AG04450 (cell line): ENCODE measurements at regions of chr12 and their contacts with region 1.

Region 1: DNA sequence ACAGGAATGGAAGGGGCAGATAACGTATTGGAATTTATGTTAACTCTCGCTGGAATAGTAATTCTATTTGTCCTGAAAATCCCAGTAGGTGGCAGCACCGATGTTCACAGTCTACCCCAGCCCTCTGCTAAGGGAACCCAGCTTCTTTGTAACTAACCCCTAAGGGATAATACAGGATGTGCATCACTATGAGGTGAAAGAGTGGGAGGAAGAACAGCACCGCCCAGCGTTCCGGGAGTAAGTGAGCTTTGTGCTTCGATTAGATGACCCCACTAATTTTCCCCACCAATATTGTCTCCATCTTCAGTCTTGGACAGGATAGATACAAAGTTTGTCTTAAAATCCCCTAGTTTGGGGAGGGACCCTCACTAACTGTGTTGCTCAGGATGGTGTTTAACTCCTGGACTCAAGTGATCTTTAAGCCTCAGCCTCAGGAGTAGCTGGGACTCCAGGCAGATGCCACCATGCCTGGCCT is 2.7 kb downstream of the SLC2A3 start:
- DNase-seq: peak; percentile 91
- H3K4me3 ChIP-seq: peak overlapping the region; percentile 93
- H3K27ac ChIP-seq: peak overlapping the region; percentile 42
- H3K27me3 ChIP-seq: no peaks in the 10 kb centered on the region
- CTCF ChIP-seq: peak; percentile 81

Region 2: DNA sequence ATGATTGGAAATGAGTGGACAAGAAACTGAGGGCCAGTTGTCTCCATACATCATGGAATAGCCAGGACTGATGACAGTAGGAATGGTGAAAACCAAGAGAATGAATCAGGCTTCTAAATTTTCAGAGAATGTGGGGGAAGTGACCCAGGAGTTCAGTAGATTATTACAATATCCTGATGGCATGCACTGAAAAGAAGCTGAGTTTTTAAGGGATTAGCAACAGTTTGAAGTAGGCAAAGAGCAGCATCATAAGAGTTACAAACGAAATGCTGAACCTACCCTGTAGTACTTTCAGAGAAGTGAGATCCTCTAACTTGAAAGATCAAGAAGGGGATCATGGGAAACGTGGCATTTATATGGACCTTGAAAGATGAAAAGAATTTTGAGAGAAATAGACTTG is 73.7 kb before region 1 on chr12:
- CTCF ChIA-PET with region 1: interaction called, 24 read pairs
- POLR2A ChIA-PET with region 1: interaction called, 25 read pairs
- DNase-seq: peak; percentile 43
- H3K4me3 ChIP-seq: no peak overlapping the region; the same call in 1 of the 2 replicates
- H3K27ac ChIP-seq: peak overlapping the region; percentile 98
- H3K27me3 ChIP-seq: no peaks in the 10 kb centered on the region
- CTCF ChIP-seq: no peak

Region 3: DNA sequence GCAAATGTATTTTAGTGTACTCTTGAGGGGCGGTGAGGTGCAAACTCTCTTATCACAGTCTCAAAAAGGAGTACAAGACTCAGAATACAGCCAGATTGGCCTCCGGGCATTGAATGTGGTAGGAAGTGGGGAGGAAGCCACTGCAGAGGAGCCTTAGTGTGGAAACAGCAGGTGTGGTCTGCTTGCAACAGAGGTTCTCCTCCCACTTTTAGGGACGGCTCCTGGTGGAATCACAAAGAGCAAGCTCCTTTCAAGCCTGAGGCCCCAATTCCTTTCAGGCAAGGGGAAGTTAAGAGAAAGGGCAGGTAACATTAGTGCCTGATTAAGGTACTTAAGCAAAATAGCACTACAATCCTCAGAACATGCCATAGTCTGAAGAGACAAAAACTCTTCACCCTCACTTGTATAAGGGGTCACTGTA is 26.4 kb after region 1 on chr12:
- CTCF ChIA-PET with region 1: interaction called, 63 read pairs
- POLR2A ChIA-PET with region 1: interaction called, 107 read pairs
- DNase-seq: no peak
- H3K4me3 ChIP-seq: no peak overlapping the region
- H3K27ac ChIP-seq: no peak overlapping the region
- H3K27me3 ChIP-seq: no peaks in the 10 kb centered on the region
- CTCF ChIP-seq: no peak

Region 4: DNA sequence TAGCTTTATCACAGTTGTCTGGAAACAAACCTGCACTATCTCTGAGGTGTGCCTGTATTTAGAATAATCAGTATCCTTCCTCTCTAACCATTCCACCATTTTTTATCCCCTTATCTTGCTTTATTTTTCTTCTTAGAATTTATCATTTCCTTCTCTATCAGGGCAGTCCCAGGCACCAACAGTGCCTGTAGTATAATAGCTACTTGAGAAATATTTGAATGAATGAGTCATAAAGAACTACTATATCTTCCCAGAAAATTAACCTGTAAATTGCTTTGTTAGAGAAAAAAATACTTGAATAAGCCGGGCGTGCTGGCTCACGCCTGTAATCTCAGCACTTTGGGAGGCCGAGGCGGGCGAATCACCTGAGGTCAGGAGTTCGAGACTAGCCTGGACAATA is 78.0 kb after region 1 on chr12:
- CTCF ChIA-PET with region 1: interaction called, 15 read pairs
- POLR2A ChIA-PET with region 1: no interaction called
- DNase-seq: no peak
- H3K4me3 ChIP-seq: no peak overlapping the region
- H3K27ac ChIP-seq: no peak overlapping the region
- H3K27me3 ChIP-seq: no peaks in the 10 kb centered on the region
- CTCF ChIP-seq: no peak

Region 5: GRCh38 chr12:8038659-8039114 is 105.4 kb after region 1 on chr12:
- CTCF ChIA-PET with region 1: interaction called, 14 read pairs
- POLR2A ChIA-PET with region 1: interaction called, 4 read pairs
- DNase-seq: peak; percentile 15
- H3K4me3 ChIP-seq: peak overlapping the region; percentile 50
- H3K27ac ChIP-seq: peak overlapping the region; percentile 52
- H3K27me3 ChIP-seq: no peaks in the 10 kb centered on the region
- CTCF ChIP-seq: no peak